Mammary epithelial cell (primary cell): ENCODE measurements at regions of chr4 and their contacts with region 1.

Region 1: GRCh38 chr4:155403886-155404285 is 27.1 kb upstream of the MAP9 start:
- DNase-seq: peak; percentile 23
- H3K4me3 ChIP-seq: no peak overlapping the region
- H3K27ac ChIP-seq: no peak overlapping the region
- H3K4me1 ChIP-seq: no peaks in the 10 kb centered on the region
- H3K27me3 ChIP-seq: peaks cover 2% of the 10 kb centered on the region
- CTCF ChIP-seq: peak in 1 of 2 donors; percentile 50

Region 2: GRCh38 chr4:154911097-154911496 is 492.8 kb before region 1 on chr4:
- CTCF ChIA-PET with region 1: no interaction called
- dilution Hi-C with region 1: no loop called
- in situ Hi-C with region 1: no loop called
- intact Hi-C with region 1: no loop called
- DNase-seq: no peak
- H3K4me3 ChIP-seq: no peak overlapping the region
- H3K27ac ChIP-seq: no peak overlapping the region
- H3K4me1 ChIP-seq: peaks cover 5% of the 10 kb centered on the region
- H3K27me3 ChIP-seq: peaks cover 2% of the 10 kb centered on the region
- CTCF ChIP-seq: peak; percentile 15 to 65

Region 3: DNA sequence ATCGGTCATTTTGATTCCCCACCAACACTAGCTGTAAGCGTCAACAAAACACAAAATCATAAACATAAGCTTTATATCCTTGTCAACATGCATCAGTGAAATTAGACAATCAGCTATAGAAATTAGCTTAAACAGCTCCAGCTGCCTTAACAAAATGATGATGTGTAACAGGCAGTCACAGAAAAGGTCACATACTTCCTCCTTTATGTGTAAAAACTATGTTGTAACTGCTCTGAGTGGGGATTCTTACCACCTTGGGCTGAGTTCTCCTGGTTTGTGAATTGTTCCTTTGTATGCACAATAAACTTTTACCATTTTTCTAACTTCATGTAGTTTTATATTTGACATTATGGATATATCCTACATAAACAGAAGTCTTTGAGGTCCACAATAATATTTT is 46.8 kb after region 1 on chr4:
- CTCF ChIA-PET with region 1: no interaction called
- dilution Hi-C with region 1: loop called (anchors 5 kb)
- in situ Hi-C with region 1: no loop called
- intact Hi-C with region 1: no loop called
- DNase-seq: no peak
- H3K4me3 ChIP-seq: no peak overlapping the region
- H3K27ac ChIP-seq: no peak overlapping the region
- H3K4me1 ChIP-seq: no peaks in the 10 kb centered on the region
- H3K27me3 ChIP-seq: peaks cover 1% of the 10 kb centered on the region
- CTCF ChIP-seq: no peak

Region 4: GRCh38 chr4:155559915-155560314 is 156.0 kb after region 1 on chr4:
- CTCF ChIA-PET with region 1: interaction called, 14 read pairs
- dilution Hi-C with region 1: no loop called
- in situ Hi-C with region 1: no loop called
- intact Hi-C with region 1: no loop called
- DNase-seq: no peak
- H3K4me3 ChIP-seq: no peak overlapping the region
- H3K27ac ChIP-seq: no peak overlapping the region
- H3K4me1 ChIP-seq: no peaks in the 10 kb centered on the region
- H3K27me3 ChIP-seq: no peaks in the 10 kb centered on the region
- CTCF ChIP-seq: no peak

Region 5: DNA sequence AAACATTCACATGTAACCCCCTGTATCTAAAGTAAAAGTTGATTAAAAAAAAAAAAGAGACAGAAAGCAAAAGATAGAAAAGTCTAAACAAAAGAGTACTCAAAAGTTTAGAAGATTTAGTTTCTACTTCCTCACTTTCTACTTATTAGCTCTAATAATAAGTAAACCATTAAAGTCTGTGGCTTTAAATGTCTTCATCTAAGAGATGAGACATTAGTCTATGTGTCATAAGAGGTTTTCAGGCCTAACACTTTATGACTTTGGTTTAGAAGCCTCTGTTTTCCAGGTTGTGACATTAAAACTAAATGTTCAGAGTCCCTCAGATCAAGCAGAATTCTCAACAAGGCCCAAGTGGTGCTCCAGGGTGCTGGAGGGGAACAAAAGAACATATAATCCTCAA is 220.6 kb after region 1 on chr4:
- CTCF ChIA-PET with region 1: no interaction called
- dilution Hi-C with region 1: no loop called
- in situ Hi-C with region 1: no loop called
- intact Hi-C with region 1: no loop called
- DNase-seq: no peak
- H3K4me3 ChIP-seq: no peak overlapping the region
- H3K27ac ChIP-seq: no peak overlapping the region
- H3K4me1 ChIP-seq: no peaks in the 10 kb centered on the region
- H3K27me3 ChIP-seq: no peaks in the 10 kb centered on the region
- CTCF ChIP-seq: no peak